HCT116 (cell line): ENCODE measurements at regions of chr15 and their contacts with region 1.

Region 1: DNA sequence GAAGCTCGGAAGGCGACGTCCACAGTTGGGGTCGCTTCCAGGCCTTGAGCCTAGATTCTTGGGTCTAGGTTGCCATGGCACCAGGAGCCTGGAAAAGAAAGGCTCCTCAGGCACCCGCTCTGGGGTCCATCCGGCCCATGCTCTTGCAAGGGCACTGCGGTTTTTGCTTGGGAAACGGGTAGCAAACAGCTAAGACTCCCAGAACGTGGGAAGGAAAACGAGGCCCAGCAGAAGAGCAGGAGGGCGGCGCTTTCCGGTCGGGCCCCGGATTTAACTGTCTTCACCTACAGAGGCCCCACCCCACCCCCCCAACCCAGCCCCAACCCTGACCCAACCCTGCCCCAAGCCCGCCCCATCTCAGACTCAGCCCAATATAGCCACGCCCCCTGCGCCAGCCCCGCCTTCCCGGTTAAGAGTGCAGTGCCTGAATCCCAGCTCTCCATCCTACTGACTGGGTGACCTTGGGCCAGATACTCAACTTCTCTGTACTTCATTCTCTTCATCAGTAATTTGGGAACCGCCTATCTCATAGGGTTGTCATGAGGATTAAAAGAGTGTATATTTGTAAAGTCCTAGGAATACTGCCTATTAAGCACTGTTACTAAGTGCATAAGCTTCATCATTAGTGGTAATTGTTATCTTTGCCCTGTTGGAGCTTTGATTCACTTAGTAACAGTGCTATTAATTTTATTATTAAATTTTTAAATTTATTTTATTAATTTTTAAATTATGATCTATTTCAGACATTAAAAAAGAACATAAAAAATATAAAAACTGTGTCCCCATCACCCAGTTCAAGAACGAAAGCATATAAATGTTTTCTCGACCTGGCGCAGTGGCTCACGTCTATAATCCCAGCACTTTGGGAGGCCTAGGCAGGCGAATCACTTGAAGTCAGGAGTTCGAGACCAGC is 28.4 kb upstream of the SMAD6 start:
- DNase-seq: peak; percentile 60
- ATAC-seq: peak; percentile 82
- H3K4me3 ChIP-seq: no peak overlapping the region
- H3K27ac ChIP-seq: no peak overlapping the region; the same call in 1 of the 2 replicates
- H3K4me1 ChIP-seq: peaks cover 21 to 31% of the 10 kb centered on the region in 2 experiments
- H3K27me3 ChIP-seq: no peaks in the 10 kb centered on the region
- CTCF ChIP-seq: no peak
- POLR2A ChIP-seq: no peak
- RAD21 ChIP-seq: no peak

Region 2: DNA sequence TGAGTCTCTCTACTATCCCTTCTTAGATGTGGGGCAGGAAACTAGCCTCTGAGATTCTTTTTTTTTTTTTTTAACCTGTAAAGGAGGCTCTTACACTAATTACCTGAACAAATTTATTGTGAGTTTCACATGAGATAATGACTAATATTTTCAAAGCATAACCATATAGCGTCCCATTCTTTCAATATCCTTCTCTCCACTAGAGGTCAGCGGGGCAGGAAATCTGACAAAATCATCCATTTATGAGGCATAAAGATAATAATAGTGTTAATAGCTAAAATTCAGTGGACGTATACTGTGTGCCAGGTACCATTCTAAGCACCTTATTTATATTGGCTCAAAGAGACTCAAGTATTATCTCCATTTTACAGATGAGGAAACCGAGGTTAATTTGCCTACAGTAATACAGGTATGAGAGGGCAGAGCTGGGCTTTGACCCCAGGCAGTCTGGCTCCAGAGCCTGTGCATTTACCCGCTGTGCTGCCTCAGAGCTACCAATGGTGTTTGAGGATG is 12.0 kb after region 1 on chr15:
- CTCF ChIA-PET with region 1: interaction called, 11 read pairs
- POLR2A ChIA-PET with region 1: no interaction called
- RAD21 ChIA-PET with region 1: interaction called in 1 of 2 experiments, 3 read pairs
- intact Hi-C with region 1: no loop called
- DNase-seq: no peak
- ATAC-seq: peak; percentile 75
- H3K4me3 ChIP-seq: no peak overlapping the region
- H3K27ac ChIP-seq: no peak overlapping the region
- H3K4me1 ChIP-seq: peaks cover 0 to 22% of the 10 kb centered on the region in 2 experiments; a peak in 2 of 4 replicates
- H3K27me3 ChIP-seq: no peaks in the 10 kb centered on the region
- CTCF ChIP-seq: peak; percentile 54 to 67 (median 63); a peak in 5 of 6 replicates
- POLR2A ChIP-seq: no peak
- RAD21 ChIP-seq: peak; percentile 50